ENCODE measurements at regions of chr1 and their contacts with region 1.

Region 1: DNA sequence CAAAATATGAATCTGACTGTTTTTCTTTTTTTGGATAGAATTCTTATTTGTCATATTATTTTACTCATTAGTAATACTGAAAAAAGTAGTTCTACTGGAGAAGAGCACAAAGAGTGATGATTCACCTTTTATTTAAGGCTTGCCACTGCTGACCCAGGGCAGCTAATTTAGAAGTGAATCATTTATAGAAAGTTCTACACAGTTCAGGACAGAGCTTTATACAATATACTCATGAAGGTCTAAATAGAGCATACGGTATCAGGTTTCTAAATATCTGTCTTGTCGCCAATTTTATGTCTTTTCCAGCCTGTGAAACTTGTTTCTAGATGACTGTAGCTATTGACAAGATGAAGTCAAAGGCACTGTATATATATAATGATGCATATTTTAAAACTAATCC is 25.0 kb downstream of the GIPC2 start:
- DNase-seq: peak; percentile 96
- ATAC-seq: peak; percentile 99
- H3K4me3 ChIP-seq: no peak overlapping the region
- H3K27ac ChIP-seq: peak overlapping the region; percentile 90
- H3K4me1 ChIP-seq: peaks cover 36% of the 10 kb centered on the region
- H3K27me3 ChIP-seq: no peaks in the 10 kb centered on the region
- CTCF ChIP-seq: no peak

Region 2: DNA sequence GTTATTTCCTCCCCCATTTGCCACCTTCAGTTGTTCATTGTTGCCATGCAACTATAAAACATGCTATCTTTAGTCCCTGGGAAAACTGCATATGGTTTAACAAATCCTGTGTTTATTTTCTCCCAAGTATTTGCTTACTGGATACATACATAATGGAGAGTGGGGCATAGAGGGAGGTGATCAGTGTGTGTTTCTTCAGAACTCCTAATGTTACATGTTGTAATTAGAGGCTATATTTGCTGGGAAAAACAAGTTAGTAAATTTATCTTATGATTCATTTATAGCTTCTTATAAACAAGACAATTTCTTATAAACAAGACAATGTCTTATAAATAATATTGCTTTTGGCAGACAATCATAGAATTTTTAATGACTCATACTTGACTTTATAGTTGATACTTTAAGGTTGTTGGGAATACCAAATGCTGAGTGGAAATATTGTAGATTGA is 32.2 kb before region 1 on chr1:
- CTCF ChIA-PET with region 1: no interaction called
- POLR2A ChIA-PET with region 1: no interaction called
- intact Hi-C with region 1: loop called (anchors 2 kb)
- DNase-seq: peak; percentile 79
- ATAC-seq: peak; percentile 85
- H3K4me3 ChIP-seq: no peak overlapping the region
- H3K27ac ChIP-seq: peak overlapping the region; percentile 74
- H3K4me1 ChIP-seq: peaks cover 13% of the 10 kb centered on the region
- H3K27me3 ChIP-seq: no peaks in the 10 kb centered on the region
- CTCF ChIP-seq: no peak

Region 3: GRCh38 chr1:78114034-78114956 is 43.5 kb after region 1 on chr1:
- CTCF ChIA-PET with region 1: interaction called, 8 read pairs
- POLR2A ChIA-PET with region 1: no interaction called
- intact Hi-C with region 1: loop called (anchors 1 kb)
- DNase-seq: peak; percentile 91
- ATAC-seq: peak; percentile 76
- H3K4me3 ChIP-seq: no peak overlapping the region
- H3K27ac ChIP-seq: no peak overlapping the region
- H3K4me1 ChIP-seq: peaks cover 4% of the 10 kb centered on the region; the same call in 1 of the 2 replicates
- H3K27me3 ChIP-seq: no peaks in the 10 kb centered on the region
- CTCF ChIP-seq: peak; percentile 99

Region 4: DNA sequence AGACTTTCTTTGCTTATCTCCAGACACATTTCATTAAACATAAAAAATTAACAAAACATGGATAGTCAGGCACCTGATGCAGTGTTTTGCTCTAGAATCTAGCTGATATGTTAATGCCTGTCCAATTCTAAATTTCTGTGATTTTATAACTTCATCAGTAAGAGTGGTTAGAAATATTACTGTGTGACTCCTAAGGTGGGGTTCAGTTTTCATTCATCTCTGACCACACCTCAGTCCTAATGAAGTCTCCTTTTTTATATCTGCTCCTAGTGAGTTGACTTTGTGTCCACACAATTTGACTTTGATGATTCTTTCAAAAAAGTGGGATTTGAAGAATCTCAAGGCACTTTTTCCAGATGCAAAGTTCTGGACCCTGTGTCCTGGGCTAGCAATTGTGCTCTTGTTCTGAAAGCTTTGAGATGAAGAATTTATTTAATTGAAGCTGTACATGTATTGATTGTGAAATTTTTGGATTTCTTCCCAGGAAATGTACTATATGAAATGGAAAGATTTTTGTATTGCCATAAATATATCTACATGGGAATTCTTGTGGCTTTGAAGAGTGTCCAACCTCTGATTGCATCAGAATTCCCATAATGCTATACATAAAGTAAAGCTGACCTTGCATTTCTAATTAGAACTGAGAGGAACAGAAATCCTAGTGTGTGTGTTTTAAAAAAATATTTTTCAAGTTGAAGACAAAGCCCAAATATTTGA is 86.2 kb after region 1 on chr1:
- CTCF ChIA-PET with region 1: no interaction called
- POLR2A ChIA-PET with region 1: no interaction called
- intact Hi-C with region 1: no loop called
- DNase-seq: peak; percentile 55
- ATAC-seq: no peak
- H3K4me3 ChIP-seq: no peak overlapping the region
- H3K27ac ChIP-seq: no peak overlapping the region
- H3K4me1 ChIP-seq: peaks cover 7% of the 10 kb centered on the region
- H3K27me3 ChIP-seq: no peaks in the 10 kb centered on the region
- CTCF ChIP-seq: no peak